ENCODE measurements at regions of chr5 and their contacts with region 1.

Region 1: DNA sequence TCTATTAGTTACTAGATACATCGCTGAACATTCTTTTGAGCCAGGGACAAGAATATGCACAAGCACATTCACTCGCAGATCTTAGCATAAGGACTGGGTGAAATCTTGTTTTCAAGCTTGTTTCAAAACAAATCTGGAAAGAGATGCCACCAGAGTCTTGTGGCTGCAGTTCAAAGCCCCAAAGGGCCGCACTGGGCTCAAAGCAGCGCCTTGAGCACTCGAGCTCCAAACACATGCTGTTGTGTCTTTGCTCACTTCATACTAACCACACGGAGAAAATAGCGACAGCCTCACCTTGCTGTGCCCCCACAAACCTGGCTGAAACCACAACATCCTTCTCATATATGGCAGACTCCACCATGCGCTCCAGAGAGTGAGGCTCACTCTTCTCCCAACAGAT is 34.2 kb upstream of the IL7R start:
- DNase-seq: peak; percentile 64
- H3K4me3 Mint-ChIP-seq: peak overlapping the region; percentile 40
- H3K27ac Mint-ChIP-seq: peak overlapping the region; percentile 94
- H3K4me1 Mint-ChIP-seq: peaks cover 87% of the 10 kb centered on the region
- H3K27me3 Mint-ChIP-seq: no peaks in the 10 kb centered on the region

Region 2: GRCh38 chr5:35672995-35673394 is 149.5 kb before region 1 on chr5:
- CTCF ChIA-PET with region 1: no interaction called
- POLR2A ChIA-PET with region 1: no interaction called
- intact Hi-C with region 1: loop called (anchors 5 kb)
- DNase-seq: peak; percentile 66
- H3K4me3 Mint-ChIP-seq: no peak overlapping the region
- H3K27ac Mint-ChIP-seq: peak overlapping the region; percentile 69
- H3K4me1 Mint-ChIP-seq: peaks cover 60% of the 10 kb centered on the region
- H3K27me3 Mint-ChIP-seq: no peaks in the 10 kb centered on the region

Region 3: DNA sequence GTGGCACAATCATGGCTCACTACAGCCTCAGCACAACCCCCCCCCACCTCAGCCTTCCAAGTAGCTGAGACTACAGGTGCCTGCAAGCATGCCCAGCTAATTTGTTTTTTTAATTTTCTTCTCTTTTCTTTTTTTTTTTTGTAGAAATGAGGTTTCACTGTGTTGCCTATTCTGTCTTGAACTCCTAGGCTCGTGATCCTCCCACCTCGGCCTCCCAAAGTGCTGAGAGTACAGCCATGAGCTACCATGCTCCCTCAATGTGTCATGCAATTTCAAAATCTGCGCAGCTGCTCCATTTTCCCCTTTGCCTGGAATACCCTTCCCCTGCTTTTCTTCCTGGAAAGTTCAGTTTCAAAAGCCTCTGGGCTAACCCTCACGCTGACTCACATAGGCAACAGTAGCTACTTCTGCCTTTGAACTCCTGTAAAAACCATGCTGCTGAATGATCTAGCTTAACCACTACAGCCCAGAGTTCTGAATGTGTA is 36.9 kb before region 1 on chr5:
- CTCF ChIA-PET with region 1: interaction called, 59 read pairs
- POLR2A ChIA-PET with region 1: interaction called, 12 read pairs
- intact Hi-C with region 1: no loop called
- DNase-seq: peak; percentile 71
- H3K4me3 Mint-ChIP-seq: peak overlapping the region; percentile 17
- H3K27ac Mint-ChIP-seq: peak overlapping the region; percentile 89
- H3K4me1 Mint-ChIP-seq: peaks cover 85% of the 10 kb centered on the region
- H3K27me3 Mint-ChIP-seq: no peaks in the 10 kb centered on the region

Region 4: GRCh38 chr5:35794684-35795375 is 27.7 kb before region 1 on chr5:
- CTCF ChIA-PET with region 1: interaction called, 7 read pairs
- POLR2A ChIA-PET with region 1: interaction called, 33 read pairs
- intact Hi-C with region 1: no loop called
- DNase-seq: no peak
- H3K4me3 Mint-ChIP-seq: peak overlapping the region; percentile 31
- H3K27ac Mint-ChIP-seq: peak overlapping the region; percentile 89
- H3K4me1 Mint-ChIP-seq: peaks cover 86% of the 10 kb centered on the region
- H3K27me3 Mint-ChIP-seq: no peaks in the 10 kb centered on the region

Region 5: DNA sequence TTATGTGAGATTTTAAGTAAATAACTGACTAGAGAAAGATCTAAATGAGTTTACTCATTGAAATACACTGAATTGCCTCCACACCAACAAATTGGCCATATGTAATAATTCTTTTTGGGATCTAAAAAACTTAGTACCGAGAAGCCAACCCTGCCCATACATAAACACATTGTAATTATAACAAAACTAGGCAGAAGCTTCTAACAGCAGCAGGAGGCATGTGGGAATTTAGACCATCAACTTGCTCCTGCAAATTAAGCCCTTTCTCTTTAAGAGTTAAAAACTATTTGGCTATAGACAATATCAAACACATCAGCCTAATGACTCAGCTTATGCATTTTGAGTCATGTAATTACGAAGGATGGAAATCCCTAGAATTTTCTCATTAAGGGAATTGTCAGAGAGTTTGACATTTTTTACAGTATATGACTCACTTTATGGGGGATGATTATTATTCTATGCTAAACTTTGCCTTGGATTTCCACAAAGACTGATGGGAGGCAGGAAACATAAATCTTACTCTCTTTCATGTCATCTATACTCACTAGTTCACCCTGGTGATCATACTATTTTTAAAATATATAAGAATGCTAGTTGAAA is 35.2 kb after region 1 on chr5:
- CTCF ChIA-PET with region 1: interaction called, 5 read pairs
- POLR2A ChIA-PET with region 1: interaction called, 87 read pairs
- intact Hi-C with region 1: loop called (anchors 1 kb)
- DNase-seq: no peak
- H3K4me3 Mint-ChIP-seq: peak overlapping the region; percentile 93
- H3K27ac Mint-ChIP-seq: peak overlapping the region; percentile 100
- H3K4me1 Mint-ChIP-seq: peaks cover 76% of the 10 kb centered on the region
- H3K27me3 Mint-ChIP-seq: no peaks in the 10 kb centered on the region

Measured in activated CD4-positive, alpha-beta memory T cell treated with anti-CD3 and anti-CD28 coated beads for 36 hours (primary cell).